ENCODE measurements at regions of chr16 and their contacts with region 1.

Region 1: GRCh38 chr16:56519459-56520250 is at the start of gene BBS2:
- DNase-seq: peak; percentile 84 to 96 (median 92)
- ATAC-seq: peak; percentile 83
- H3K4me3 ChIP-seq: peak within 1 kb of the TSS; percentile 94 to 99
- H3K4me3 Mint-ChIP-seq: peak within 1 kb of the TSS; percentile 86
- H3K27ac ChIP-seq: peak within 1 kb of the TSS; percentile 82 to 92
- H3K27ac Mint-ChIP-seq: peak within 1 kb of the TSS; percentile 92
- H3K4me1 ChIP-seq: peaks cover 32% of the 10 kb centered on the region
- H3K4me1 Mint-ChIP-seq: peaks cover 50% of the 10 kb centered on the region
- H3K27me3 ChIP-seq: no peaks in the 10 kb centered on the region
- H3K27me3 Mint-ChIP-seq: no peaks in the 10 kb centered on the region
- CTCF ChIP-seq: no peak
- total RNA-seq, gene BBS2: 60.6 to 62.1 TPM

Region 2: DNA sequence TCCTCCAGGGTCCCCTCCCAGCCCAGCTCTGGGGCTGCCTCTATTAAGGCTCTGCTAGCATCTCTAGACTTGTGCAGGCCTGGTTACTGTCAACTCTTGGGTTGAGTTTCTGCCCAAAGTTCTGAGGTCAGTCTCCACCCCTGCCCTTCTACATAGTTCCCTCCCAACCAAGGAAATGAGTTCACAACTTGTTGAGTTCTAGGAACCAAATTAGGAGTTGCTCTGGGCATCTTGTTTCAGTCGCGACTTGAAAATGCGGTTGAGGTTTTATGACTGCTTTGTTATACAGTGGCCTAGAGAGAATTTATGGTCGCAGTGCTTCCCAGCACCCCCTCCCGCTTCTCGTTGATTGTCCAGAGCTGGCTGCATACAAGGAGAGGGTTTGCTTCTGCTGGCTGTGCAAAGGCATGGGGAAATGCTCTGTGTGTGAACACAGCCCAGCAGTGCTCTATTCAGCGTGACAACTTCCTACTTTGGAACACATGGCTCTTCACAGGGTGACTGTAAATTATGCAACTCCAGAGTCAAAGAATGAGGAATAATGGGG is 308.1 kb before region 1 on chr16:
- CTCF ChIA-PET with region 1: no interaction called
- POLR2A ChIA-PET with region 1: no interaction called
- intact Hi-C with region 1: no loop called
- DNase-seq: no peak
- ATAC-seq: no peak
- H3K4me3 ChIP-seq: no peak overlapping the region
- H3K4me3 Mint-ChIP-seq: no peak overlapping the region
- H3K27ac ChIP-seq: no peak overlapping the region
- H3K27ac Mint-ChIP-seq: no peak overlapping the region
- H3K4me1 ChIP-seq: no peaks in the 10 kb centered on the region
- H3K4me1 Mint-ChIP-seq: no peaks in the 10 kb centered on the region
- H3K27me3 ChIP-seq: no peaks in the 10 kb centered on the region
- H3K27me3 Mint-ChIP-seq: peaks cover 19% of the 10 kb centered on the region
- CTCF ChIP-seq: no peak

Region 3: DNA sequence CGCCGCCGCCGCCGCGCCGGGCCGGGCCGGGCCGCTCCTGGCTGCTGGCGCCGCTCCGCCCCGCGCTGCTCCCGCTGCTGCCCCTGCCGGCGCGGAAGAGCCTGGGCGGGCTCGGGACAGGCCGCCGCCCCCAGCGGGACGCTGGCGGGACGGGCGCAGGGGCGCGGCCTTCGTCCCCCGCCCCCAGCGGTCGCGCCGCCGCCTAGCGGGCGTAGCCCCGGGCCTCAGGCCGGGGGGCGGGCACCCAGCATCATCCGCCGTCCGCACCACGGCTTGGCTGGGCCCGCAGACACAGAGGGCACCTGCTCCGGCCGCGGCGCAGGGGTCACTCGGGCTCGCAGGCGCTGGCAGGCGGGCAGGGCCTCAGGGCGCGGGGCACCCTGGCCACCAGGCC is 94.2 kb before region 1 on chr16 and contains the start of gene AMFR:
- CTCF ChIA-PET with region 1: no interaction called
- POLR2A ChIA-PET with region 1: no interaction called
- intact Hi-C with region 1: loop called in 1 of 2 experiments (anchors 1 kb)
- DNase-seq: peak; percentile 35 to 93 (median 63)
- ATAC-seq: peak; percentile 93
- H3K4me3 ChIP-seq: peak within 1 kb of the TSS; percentile 46 to 62
- H3K4me3 Mint-ChIP-seq: peak within 1 kb of the TSS; percentile 89
- H3K27ac ChIP-seq: peak within 1 kb of the TSS; percentile 17 to 59
- H3K27ac Mint-ChIP-seq: peak within 1 kb of the TSS; percentile 85
- H3K4me1 ChIP-seq: peaks cover 19% of the 10 kb centered on the region
- H3K4me1 Mint-ChIP-seq: peaks cover 39% of the 10 kb centered on the region
- H3K27me3 ChIP-seq: no peaks in the 10 kb centered on the region
- H3K27me3 Mint-ChIP-seq: no peaks in the 10 kb centered on the region
- CTCF ChIP-seq: peak; percentile 45
- total RNA-seq, gene AMFR: 75.4 to 76.4 TPM

Region 4: DNA sequence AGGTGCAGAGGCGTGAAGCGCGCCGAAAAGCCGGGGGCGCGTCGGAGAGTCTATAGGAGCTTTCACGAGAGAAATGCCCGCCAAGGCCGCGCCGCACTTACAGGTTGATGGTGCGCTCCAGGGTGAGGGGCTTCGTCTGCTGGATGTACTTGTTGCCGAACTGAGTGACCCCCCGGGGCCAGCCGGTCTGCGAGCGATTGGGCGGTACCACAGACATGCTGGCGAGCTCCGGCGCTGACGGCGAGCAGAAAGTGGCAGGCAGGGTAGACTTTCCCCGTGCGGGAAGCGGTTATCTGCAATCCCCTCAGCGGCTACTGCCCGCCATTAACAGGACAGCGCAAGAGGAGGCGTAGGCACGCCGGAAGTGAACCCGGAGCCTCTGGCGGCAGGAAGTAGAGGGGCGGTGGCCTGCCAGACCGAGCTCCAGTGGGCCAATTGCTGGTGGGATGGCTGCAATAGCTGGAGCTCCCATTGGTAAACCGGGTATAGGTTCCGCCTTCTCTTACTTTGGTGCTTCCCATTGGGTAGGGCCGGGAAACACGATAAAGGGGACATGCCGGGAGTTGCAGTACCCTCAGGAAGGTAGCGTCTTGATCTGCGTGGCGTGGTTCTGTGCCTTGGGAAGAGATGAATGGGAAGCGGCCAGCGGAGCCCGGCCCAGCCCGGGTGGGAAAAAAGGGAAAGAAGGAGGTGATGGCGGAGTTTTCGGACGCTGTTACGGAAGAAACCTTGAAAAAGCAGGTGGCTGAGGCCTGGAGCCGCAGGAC is 68.5 kb before region 1 on chr16 and contains the starts of genes NUDT21 and OGFOD1:
- CTCF ChIA-PET with region 1: no interaction called
- POLR2A ChIA-PET with region 1: interaction called, 4 read pairs
- intact Hi-C with region 1: loop called in 1 of 2 experiments (anchors 1 kb)
- DNase-seq: peak; percentile 82 to 98 (median 90)
- ATAC-seq: peak; percentile 98
- H3K4me3 ChIP-seq: peak within 1 kb of the TSS; percentile 85 to 87
- H3K4me3 Mint-ChIP-seq: peak within 1 kb of the TSS; percentile 97
- H3K27ac ChIP-seq: peak within 1 kb of the TSS; percentile 76 to 77
- H3K27ac Mint-ChIP-seq: peak within 1 kb of the TSS; percentile 94
- H3K4me1 ChIP-seq: peaks cover 31% of the 10 kb centered on the region
- H3K4me1 Mint-ChIP-seq: peaks cover 60% of the 10 kb centered on the region
- H3K27me3 ChIP-seq: no peaks in the 10 kb centered on the region
- H3K27me3 Mint-ChIP-seq: no peaks in the 10 kb centered on the region
- CTCF ChIP-seq: no peak
- total RNA-seq, gene NUDT21: 99.1 to 106 TPM
- total RNA-seq, gene OGFOD1: 17.0 to 21.5 TPM

Region 5: GRCh38 chr16:56643080-56643778 is 123.6 kb after region 1 on chr16:
- CTCF ChIA-PET with region 1: no interaction called
- POLR2A ChIA-PET with region 1: interaction called, 3 read pairs
- intact Hi-C with region 1: loop called in 1 of 2 experiments (anchors 1 kb)
- DNase-seq: peak; percentile 52 to 92 (median 77)
- ATAC-seq: peak; percentile 99
- H3K4me3 ChIP-seq: peak overlapping the region; percentile 33 to 47
- H3K4me3 Mint-ChIP-seq: peak overlapping the region; percentile 71
- H3K27ac ChIP-seq: peak overlapping the region in 1 of 2 experiments; percentile 3
- H3K27ac Mint-ChIP-seq: no peak overlapping the region
- H3K4me1 ChIP-seq: peaks cover 11% of the 10 kb centered on the region
- H3K4me1 Mint-ChIP-seq: peaks cover 23% of the 10 kb centered on the region
- H3K27me3 ChIP-seq: peaks cover 3 to 5% of the 10 kb centered on the region in 2 experiments
- H3K27me3 Mint-ChIP-seq: peaks cover 23% of the 10 kb centered on the region
- CTCF ChIP-seq: peak; percentile 19

Region 6: GRCh38 chr16:56789360-56789759 is 269.7 kb after region 1 on chr16:
- CTCF ChIA-PET with region 1: no interaction called
- POLR2A ChIA-PET with region 1: no interaction called
- intact Hi-C with region 1: loop called in 1 of 2 experiments (anchors 5 kb)
- DNase-seq: peak in 4 of 9 experiments; percentile 5 to 50 (median 44)
- ATAC-seq: peak; percentile 55
- H3K4me3 ChIP-seq: no peak overlapping the region
- H3K4me3 Mint-ChIP-seq: no peak overlapping the region
- H3K27ac ChIP-seq: no peak overlapping the region
- H3K27ac Mint-ChIP-seq: no peak overlapping the region
- H3K4me1 ChIP-seq: no peaks in the 10 kb centered on the region
- H3K4me1 Mint-ChIP-seq: peaks cover 3% of the 10 kb centered on the region
- H3K27me3 ChIP-seq: no peaks in the 10 kb centered on the region
- H3K27me3 Mint-ChIP-seq: no peaks in the 10 kb centered on the region
- CTCF ChIP-seq: peak; percentile 23

Measured in CD8-positive, alpha-beta T cell (primary cell).